Psoas muscle (tissue), 8 donors: ENCODE measurements at regions of chr2 and their contacts with region 1.

Region 1: DNA sequence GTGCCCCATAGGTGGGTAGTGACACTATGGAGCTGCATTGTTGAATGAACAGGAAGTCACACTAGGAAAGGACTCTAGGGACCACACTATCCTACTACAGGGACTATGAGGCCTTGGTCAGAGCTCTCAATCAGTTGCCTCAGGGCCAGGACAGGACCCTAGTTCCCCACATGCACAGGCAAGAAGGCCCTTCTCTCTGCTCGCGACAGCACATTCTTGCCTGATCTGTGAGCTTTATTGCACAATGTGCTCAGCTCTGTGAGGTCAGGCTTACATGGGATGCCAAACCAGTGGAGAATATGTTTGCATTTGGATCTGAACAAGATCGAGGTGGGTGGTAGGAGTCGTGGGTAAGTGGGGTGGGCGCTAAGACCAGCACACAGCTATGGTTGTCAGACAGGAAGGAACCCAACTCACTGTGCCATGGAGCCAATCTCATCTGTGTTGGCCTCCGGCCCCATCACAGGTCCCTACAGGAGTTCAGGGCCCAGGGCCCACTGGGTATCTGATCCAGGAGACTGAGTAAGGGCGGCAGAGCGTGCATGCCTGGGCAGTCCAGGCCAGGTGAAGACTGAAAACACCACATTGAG is 8.0 kb downstream of the PCARE start:
- DNase-seq: no peak
- ATAC-seq: peak in 3 of 4 donors; percentile 38 to 44 (median 40)
- H3K4me3 ChIP-seq: no peak overlapping the region
- H3K27ac ChIP-seq: no peak overlapping the region
- H3K4me1 ChIP-seq: peaks cover 16% of the 10 kb centered on the region
- H3K27me3 ChIP-seq: no peaks in the 10 kb centered on the region
- CTCF ChIP-seq: no peak

Region 2: GRCh38 chr2:29115797-29116781 is 49.7 kb after region 1 on chr2:
- intact Hi-C with region 1: loop called in 1 of 2 experiments (anchors 5 kb)
- DNase-seq: peak; percentile 75 to 79
- ATAC-seq: peak; percentile 28 to 65 (median 34)
- H3K4me3 ChIP-seq: peak overlapping the region; percentile 89
- H3K27ac ChIP-seq: peak overlapping the region; percentile 92
- H3K4me1 ChIP-seq: peaks cover 61% of the 10 kb centered on the region
- H3K27me3 ChIP-seq: no peaks in the 10 kb centered on the region
- CTCF ChIP-seq: no peak